ENCODE measurements at regions of chr12 and their contacts with region 1.

Region 1: GRCh38 chr12:49515266-49515665 is 23.6 kb upstream of the KCNH3 start:
- DNase-seq: no peak
- H3K4me3 Mint-ChIP-seq: no peak overlapping the region
- H3K27ac Mint-ChIP-seq: no peak overlapping the region
- H3K4me1 Mint-ChIP-seq: peaks cover 1% of the 10 kb centered on the region
- H3K27me3 Mint-ChIP-seq: no peaks in the 10 kb centered on the region

Region 2: GRCh38 chr12:48957141-48958048 is 557.9 kb before region 1 on chr12 and contains the start of gene ARF3:
- CTCF ChIA-PET with region 1: no interaction called
- POLR2A ChIA-PET with region 1: no interaction called
- DNase-seq: peak; percentile 94
- H3K4me3 Mint-ChIP-seq: peak within 1 kb of the TSS; percentile 95
- H3K27ac Mint-ChIP-seq: peak within 1 kb of the TSS; percentile 64
- H3K4me1 Mint-ChIP-seq: peaks cover 36% of the 10 kb centered on the region
- H3K27me3 Mint-ChIP-seq: peaks cover 12% of the 10 kb centered on the region
- total RNA-seq, gene ARF3: 114 to 122 TPM

Region 3: DNA sequence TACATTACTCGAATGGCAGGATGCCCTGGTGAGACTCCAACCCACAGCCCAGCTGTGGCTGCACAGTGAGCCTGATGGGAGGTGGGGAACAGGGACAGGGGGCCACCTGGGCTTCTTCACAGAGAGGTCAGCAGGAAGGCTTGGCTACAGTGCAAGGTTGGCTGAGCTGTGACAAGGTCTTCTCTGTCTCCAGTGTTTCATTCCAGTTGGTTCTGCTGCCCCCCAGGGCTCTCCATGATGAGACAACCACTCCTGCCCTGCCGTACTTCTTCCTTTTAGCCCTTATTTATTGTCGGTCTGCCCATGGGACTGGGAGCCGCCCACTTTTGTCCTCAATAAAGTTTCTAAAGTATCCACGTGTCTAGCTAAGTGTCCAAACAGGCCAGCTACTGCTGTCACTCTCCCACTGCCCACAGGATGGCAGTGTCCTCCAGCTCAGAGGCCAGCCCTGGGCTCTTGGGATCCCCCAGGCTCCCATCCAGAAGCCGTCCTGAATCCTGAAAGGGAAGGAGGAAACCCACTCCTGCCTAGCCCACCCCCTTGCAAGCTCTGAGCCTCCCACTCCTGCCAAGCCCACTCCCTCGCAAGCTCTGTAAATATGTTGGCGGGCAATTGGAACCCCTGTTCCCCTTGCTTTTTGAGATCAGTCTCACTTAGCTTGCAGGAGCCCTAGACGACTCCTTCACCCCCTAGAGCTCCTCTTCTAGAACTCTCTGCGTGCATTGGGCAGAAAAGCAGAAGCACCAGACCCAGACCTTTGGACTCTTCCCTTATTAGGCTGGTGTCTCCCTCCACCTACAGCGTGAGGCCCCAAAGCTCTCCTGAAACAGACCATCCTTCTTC is 183.7 kb before region 1 on chr12:
- CTCF ChIA-PET with region 1: interaction called, 10 read pairs
- POLR2A ChIA-PET with region 1: no interaction called
- DNase-seq: no peak
- H3K4me3 Mint-ChIP-seq: no peak overlapping the region
- H3K27ac Mint-ChIP-seq: no peak overlapping the region
- H3K4me1 Mint-ChIP-seq: peaks cover 4% of the 10 kb centered on the region
- H3K27me3 Mint-ChIP-seq: peaks cover 34% of the 10 kb centered on the region

Region 4: GRCh38 chr12:49503674-49504180 is 11.5 kb before region 1 on chr12:
- CTCF ChIA-PET with region 1: interaction called, 10 read pairs
- POLR2A ChIA-PET with region 1: no interaction called
- DNase-seq: no peak
- H3K4me3 Mint-ChIP-seq: no peak overlapping the region
- H3K27ac Mint-ChIP-seq: no peak overlapping the region
- H3K4me1 Mint-ChIP-seq: peaks cover 1% of the 10 kb centered on the region
- H3K27me3 Mint-ChIP-seq: no peaks in the 10 kb centered on the region